ENCODE measurements at regions of chr9 and their contacts with region 1.

Region 1: GRCh38 chr9:136790927-136791641 is at the start of gene TMEM141:
- DNase-seq: peak; percentile 95
- ATAC-seq: peak; percentile 88
- H3K4me3 ChIP-seq: peak within 1 kb of the TSS; percentile 68
- H3K27ac ChIP-seq: peak within 1 kb of the TSS; percentile 79
- H3K4me1 ChIP-seq: peaks cover 22% of the 10 kb centered on the region
- H3K27me3 ChIP-seq: no peaks in the 10 kb centered on the region
- CTCF ChIP-seq: no peak
- total RNA-seq, gene TMEM141: 94.6 and 101 TPM in 2 replicates

Region 2: GRCh38 chr9:137034863-137035761 is 244.0 kb after region 1 on chr9:
- CTCF ChIA-PET with region 1: no interaction called
- POLR2A ChIA-PET with region 1: no interaction called
- intact Hi-C with region 1: loop called (anchors 5 kb)
- DNase-seq: peak; percentile 78
- ATAC-seq: peak; percentile 92
- H3K4me3 ChIP-seq: peak overlapping the region; percentile 57
- H3K27ac ChIP-seq: no peak overlapping the region
- H3K4me1 ChIP-seq: peaks cover 8% of the 10 kb centered on the region
- H3K27me3 ChIP-seq: no peaks in the 10 kb centered on the region
- CTCF ChIP-seq: peak; percentile 83